ENCODE measurements at regions of chr19 and their contacts with region 1.

Region 1: DNA sequence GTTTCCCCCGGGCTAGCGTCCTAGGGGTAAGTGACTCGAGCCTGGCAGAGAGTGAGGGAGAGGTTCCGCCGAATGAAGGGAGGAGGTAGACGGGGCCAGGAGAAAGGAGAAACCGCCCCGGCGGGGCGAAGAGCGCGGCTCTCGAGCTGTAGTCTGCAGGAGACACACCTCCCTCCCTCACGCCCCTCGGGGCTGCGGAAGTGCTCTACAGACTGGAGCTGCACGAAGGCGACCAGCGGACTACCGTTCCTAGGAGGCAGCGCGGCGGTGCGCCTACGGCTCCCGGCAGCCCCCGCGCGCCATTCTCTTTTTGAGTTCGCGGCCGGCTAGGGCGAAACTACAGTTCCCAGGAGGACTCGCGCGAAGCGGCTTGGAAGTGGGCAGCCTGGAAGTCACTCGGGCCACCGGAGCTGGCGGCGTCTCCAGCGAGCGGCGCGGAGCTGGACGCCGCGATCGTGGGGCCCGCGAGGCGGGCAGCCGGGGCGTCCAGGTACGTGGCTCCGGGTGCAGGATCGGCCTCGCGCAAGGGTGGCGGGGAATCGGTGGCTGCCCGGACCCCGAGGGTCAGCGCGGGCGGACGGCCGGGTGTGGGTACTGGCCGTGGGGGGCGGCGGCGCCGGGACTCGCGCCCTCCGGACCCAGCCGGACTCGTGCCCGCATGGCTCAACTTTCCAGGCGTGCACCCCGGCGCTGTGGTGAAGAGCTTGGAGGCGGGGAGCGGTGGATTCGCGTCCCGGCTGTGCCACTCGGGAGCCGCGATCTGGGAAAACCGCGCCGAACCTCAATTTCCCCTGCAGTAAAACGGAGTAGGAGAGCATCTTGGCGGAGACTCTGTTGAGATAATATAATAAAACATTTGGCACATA is at the start of gene SIPA1L3:
- DNase-seq: peak; percentile 96
- ATAC-seq: peak; percentile 93
- H3K4me3 ChIP-seq: peak within 1 kb of the TSS; percentile 68 to 99 (median 94)
- H3K4me3 Mint-ChIP-seq: peak within 1 kb of the TSS; percentile 91
- H3K27ac ChIP-seq: peak within 1 kb of the TSS; percentile 64 to 84
- H3K27ac Mint-ChIP-seq: peak within 1 kb of the TSS; percentile 96
- H3K4me1 ChIP-seq: peaks cover 55 to 63% of the 10 kb centered on the region in 2 donors
- H3K4me1 Mint-ChIP-seq: peaks cover 58% of the 10 kb centered on the region
- H3K27me3 ChIP-seq: no peaks in the 10 kb centered on the region
- H3K27me3 Mint-ChIP-seq: no peaks in the 10 kb centered on the region
- CTCF ChIP-seq: no peak
- total RNA-seq, gene SIPA1L3: 290 and 295 TPM in 2 replicates

Region 2: DNA sequence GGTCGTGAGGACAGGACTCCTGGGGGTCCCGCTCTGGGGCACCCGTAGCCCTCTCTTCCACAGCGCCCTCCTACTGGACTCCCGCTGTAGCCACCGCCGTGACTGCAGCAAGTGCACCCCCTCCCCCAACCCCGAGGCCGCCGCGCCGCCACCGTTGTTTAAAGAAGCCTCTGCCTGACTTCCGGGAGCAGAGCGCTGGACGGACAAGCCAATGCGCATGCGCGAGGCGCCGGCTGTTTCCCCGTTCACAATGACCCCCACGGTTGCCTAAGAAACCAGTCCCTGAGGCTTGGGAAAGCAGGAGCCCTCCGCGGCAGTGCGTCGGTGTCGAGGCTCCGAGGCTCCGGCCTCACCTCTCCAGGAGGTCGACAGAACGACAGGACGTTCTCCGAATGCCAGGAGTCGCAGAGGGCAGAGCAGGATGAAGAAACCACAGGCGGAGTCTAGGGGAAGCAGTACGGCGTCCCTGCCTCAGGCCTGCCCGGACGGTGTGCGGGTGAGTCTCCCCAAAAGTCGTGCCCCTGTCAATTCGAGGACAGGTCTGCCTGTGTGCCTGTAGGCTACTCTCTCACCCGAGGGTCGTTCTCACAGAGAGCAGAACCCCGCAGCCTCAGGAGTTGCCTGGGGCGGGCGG is 899.4 kb before region 1 on chr19:
- CTCF ChIA-PET with region 1: no interaction called
- POLR2A ChIA-PET with region 1: no interaction called
- intact Hi-C with region 1: no loop called
- DNase-seq: peak; percentile 28
- ATAC-seq: no peak
- H3K4me3 ChIP-seq: peak overlapping the region in 4 of 5 experiments; percentile 12 to 68 (median 40)
- H3K4me3 Mint-ChIP-seq: peak overlapping the region; percentile 81
- H3K27ac ChIP-seq: no peak overlapping the region
- H3K27ac Mint-ChIP-seq: peak overlapping the region; percentile 11
- H3K4me1 ChIP-seq: no peaks in the 10 kb centered on the region
- H3K4me1 Mint-ChIP-seq: no peaks in the 10 kb centered on the region
- H3K27me3 ChIP-seq: no peaks in the 10 kb centered on the region
- H3K27me3 Mint-ChIP-seq: no peaks in the 10 kb centered on the region
- CTCF ChIP-seq: no peak

Region 3: GRCh38 chr19:37874784-37875183 is 32.3 kb before region 1 on chr19:
- CTCF ChIA-PET with region 1: no interaction called
- POLR2A ChIA-PET with region 1: no interaction called
- intact Hi-C with region 1: no loop called
- DNase-seq: no peak
- ATAC-seq: no peak
- H3K4me3 ChIP-seq: no peak overlapping the region
- H3K4me3 Mint-ChIP-seq: no peak overlapping the region
- H3K27ac ChIP-seq: no peak overlapping the region
- H3K27ac Mint-ChIP-seq: no peak overlapping the region
- H3K4me1 ChIP-seq: no peaks in the 10 kb centered on the region
- H3K4me1 Mint-ChIP-seq: no peaks in the 10 kb centered on the region
- H3K27me3 ChIP-seq: peaks cover 0 to under 1% (median 0%) of the 10 kb centered on the region in 4 experiments
- H3K27me3 Mint-ChIP-seq: peaks cover 9% of the 10 kb centered on the region
- CTCF ChIP-seq: no peak

Region 4: DNA sequence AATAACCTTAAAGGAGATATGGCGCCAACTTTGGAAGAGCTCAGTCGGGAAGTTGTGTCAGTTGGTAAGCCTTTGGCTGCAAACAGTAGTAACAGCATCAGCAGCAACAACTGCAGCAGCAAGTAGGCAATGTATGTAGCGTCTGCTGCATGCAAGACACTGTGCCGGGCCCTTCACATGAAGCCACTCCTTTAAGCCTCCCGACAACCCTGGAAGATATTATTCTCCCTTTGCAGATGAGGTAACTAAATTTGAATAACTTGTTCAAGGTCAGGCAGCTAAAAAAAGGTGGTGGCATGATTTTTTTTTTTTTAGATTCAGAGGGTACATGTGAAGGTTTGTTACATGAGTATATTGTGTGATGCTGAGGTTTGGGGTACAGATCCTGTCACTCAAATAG is 19.6 kb after region 1 on chr19:
- CTCF ChIA-PET with region 1: interaction called, 54 read pairs
- POLR2A ChIA-PET with region 1: interaction called, 46 read pairs
- intact Hi-C with region 1: loop called (anchors 1 kb)
- DNase-seq: peak; percentile 48
- ATAC-seq: peak; percentile 11
- H3K4me3 ChIP-seq: no peak overlapping the region
- H3K4me3 Mint-ChIP-seq: peak overlapping the region; percentile 80
- H3K27ac ChIP-seq: peak overlapping the region; percentile 65 to 85
- H3K27ac Mint-ChIP-seq: peak overlapping the region; percentile 92
- H3K4me1 ChIP-seq: peaks cover 87 to 96% of the 10 kb centered on the region in 2 donors
- H3K4me1 Mint-ChIP-seq: peaks cover 79% of the 10 kb centered on the region
- H3K27me3 ChIP-seq: no peaks in the 10 kb centered on the region
- H3K27me3 Mint-ChIP-seq: no peaks in the 10 kb centered on the region
- CTCF ChIP-seq: no peak

Region 5: DNA sequence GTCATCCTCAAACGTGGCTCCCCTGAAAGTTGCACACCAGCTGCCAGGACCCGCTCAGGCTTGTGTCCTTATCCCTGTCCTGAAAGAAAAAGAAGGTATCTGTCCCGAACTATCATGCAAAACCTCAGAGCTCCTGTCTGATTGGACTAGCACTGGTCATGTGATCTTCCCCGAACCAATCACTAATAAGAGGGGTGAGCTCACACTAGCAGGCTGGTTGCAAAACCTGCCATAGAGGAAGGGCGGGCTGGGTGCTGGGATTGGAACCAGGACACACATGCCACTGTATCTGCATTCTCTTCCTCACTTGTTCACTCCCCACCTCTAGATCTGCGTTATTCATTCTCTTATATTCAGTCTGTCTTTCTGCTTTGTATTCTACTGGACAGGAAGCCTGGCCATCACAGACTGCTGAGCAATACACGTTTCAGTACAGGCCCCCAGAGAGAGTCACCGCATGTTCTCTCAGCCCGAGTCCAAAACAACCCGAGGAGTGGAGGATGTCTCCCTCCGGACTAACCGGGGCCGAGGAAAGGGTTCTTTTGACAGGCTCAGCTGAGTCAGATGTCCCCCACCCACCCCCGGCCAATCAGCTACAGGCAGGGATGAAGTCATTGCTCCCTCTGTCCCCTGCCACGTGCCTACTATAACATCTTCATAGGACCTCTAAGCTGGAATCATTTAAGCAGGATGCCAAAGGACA is 97.6 kb after region 1 on chr19:
- CTCF ChIA-PET with region 1: interaction called, 40 read pairs
- POLR2A ChIA-PET with region 1: interaction called, 23 read pairs
- intact Hi-C with region 1: loop called (anchors 1 kb)
- DNase-seq: peak; percentile 79
- ATAC-seq: peak; percentile 45
- H3K4me3 ChIP-seq: peak overlapping the region in 4 of 5 experiments; percentile 5 to 55 (median 50)
- H3K4me3 Mint-ChIP-seq: no peak overlapping the region
- H3K27ac ChIP-seq: peak overlapping the region; percentile 85 to 92
- H3K27ac Mint-ChIP-seq: no peak overlapping the region
- H3K4me1 ChIP-seq: peaks cover 73 to 83% of the 10 kb centered on the region in 2 donors
- H3K4me1 Mint-ChIP-seq: peaks cover 35% of the 10 kb centered on the region
- H3K27me3 ChIP-seq: no peaks in the 10 kb centered on the region
- H3K27me3 Mint-ChIP-seq: no peaks in the 10 kb centered on the region
- CTCF ChIP-seq: no peak

Region 6: DNA sequence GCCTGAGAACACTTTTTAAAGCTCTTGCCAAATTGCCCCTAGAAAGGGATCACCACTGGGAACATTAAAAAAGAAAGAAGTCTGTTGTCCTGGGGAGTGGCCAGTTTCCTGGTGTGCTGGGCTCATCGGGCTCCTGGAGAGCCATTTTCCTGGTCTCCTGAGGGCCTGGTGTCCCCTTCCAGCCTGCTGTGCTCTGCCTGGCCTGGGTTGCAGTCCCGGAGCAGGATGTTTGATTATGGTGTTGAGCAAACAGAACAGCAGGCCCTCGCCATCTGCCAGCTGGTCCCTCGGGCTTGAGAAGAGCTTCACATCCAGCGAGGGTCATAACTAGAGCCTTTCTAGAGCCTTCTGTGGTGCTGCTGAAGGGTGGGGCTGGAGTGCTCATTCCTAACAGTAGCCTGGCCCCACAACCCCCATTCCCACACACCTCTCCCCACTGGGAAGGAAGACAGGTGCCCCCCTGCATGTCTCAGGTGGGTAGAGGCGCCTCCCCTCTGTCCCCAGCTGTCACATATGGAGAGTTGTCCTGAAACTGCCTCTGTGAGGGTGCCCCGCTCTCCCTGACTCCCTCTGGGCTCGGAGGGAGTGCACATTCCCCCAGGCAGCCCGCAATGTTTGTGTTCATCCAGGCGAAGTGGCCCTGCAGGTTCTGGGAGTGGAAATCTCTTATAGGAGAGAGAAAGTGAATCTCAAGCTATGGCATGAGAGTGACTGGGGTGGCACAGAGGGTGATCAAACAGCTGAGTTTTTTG is 151.0 kb after region 1 on chr19:
- CTCF ChIA-PET with region 1: interaction called, 34 read pairs
- POLR2A ChIA-PET with region 1: no interaction called
- intact Hi-C with region 1: no loop called
- DNase-seq: no peak
- ATAC-seq: no peak
- H3K4me3 ChIP-seq: no peak overlapping the region
- H3K4me3 Mint-ChIP-seq: peak overlapping the region; percentile 45
- H3K27ac ChIP-seq: peak overlapping the region; percentile 42 to 75
- H3K27ac Mint-ChIP-seq: peak overlapping the region; percentile 92
- H3K4me1 ChIP-seq: peaks cover 27 to 50% of the 10 kb centered on the region in 2 donors
- H3K4me1 Mint-ChIP-seq: peaks cover 60% of the 10 kb centered on the region
- H3K27me3 ChIP-seq: no peaks in the 10 kb centered on the region
- H3K27me3 Mint-ChIP-seq: no peaks in the 10 kb centered on the region
- CTCF ChIP-seq: no peak

Region 7: DNA sequence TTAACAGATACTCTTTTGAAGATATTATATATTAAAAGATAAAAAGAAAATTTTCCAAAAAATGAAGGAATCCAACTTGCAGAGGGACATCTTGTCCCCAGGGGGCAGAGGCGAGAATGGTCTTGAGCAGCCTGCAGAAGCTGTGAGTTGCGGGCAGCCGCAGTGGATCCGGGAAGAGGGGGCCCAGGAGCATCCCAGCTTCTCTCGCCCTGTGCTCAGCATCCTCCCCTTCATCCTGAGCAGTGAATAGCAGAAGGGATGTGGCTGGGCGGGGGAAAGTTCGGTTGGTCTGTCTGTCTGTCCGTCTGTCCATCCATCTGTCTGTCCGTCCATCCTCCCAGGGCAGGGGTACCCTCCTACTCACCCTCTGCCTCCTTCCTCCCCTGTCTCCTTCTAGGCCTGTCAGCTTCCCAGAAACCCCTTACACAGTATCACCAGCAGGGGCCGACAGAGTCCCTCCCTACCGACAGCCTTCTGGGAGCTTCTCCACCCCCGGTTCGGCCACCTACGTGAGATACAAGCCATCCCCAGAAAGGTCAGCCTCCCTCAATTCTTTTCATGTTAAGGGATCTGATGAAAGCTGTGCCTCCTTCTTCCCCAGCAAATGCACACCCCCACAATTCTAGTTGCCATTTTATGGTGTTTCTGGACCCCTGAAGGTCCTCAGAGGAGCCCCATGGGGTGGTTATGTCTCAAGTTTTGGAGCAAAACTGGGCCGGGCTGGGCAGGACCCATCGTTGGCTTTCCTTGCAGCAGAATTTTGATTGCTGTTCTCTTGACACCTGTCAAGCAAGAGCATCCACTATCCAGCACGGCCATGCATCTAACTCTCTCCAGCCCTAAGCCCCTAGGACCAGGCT is 235.3 kb after region 1 on chr19:
- CTCF ChIA-PET with region 1: interaction called, 62 read pairs
- POLR2A ChIA-PET with region 1: no interaction called
- intact Hi-C with region 1: no loop called
- DNase-seq: peak; percentile 49
- ATAC-seq: peak; percentile 66
- H3K4me3 ChIP-seq: no peak overlapping the region
- H3K4me3 Mint-ChIP-seq: no peak overlapping the region
- H3K27ac ChIP-seq: no peak overlapping the region
- H3K27ac Mint-ChIP-seq: peak overlapping the region; percentile 74
- H3K4me1 ChIP-seq: no peaks in the 10 kb centered on the region
- H3K4me1 Mint-ChIP-seq: no peaks in the 10 kb centered on the region
- H3K27me3 ChIP-seq: no peaks in the 10 kb centered on the region
- H3K27me3 Mint-ChIP-seq: no peaks in the 10 kb centered on the region
- CTCF ChIP-seq: peak; percentile 51

Region 8: GRCh38 chr19:38194056-38194701 is 287.1 kb after region 1 on chr19:
- CTCF ChIA-PET with region 1: no interaction called
- POLR2A ChIA-PET with region 1: no interaction called
- intact Hi-C with region 1: no loop called
- DNase-seq: no peak
- ATAC-seq: no peak
- H3K4me3 ChIP-seq: no peak overlapping the region
- H3K4me3 Mint-ChIP-seq: no peak overlapping the region
- H3K27ac ChIP-seq: no peak overlapping the region
- H3K27ac Mint-ChIP-seq: no peak overlapping the region
- H3K4me1 ChIP-seq: no peaks in the 10 kb centered on the region
- H3K4me1 Mint-ChIP-seq: peaks cover 4% of the 10 kb centered on the region
- H3K27me3 ChIP-seq: no peaks in the 10 kb centered on the region
- H3K27me3 Mint-ChIP-seq: no peaks in the 10 kb centered on the region
- CTCF ChIP-seq: no peak

Region 9: GRCh38 chr19:38315657-38316476 is 408.8 kb after region 1 on chr19 and contains the start of gene YIF1B:
- CTCF ChIA-PET with region 1: interaction called, 3 read pairs
- POLR2A ChIA-PET with region 1: no interaction called
- intact Hi-C with region 1: loop called (anchors 1 kb)
- DNase-seq: peak; percentile 96
- ATAC-seq: peak; percentile 91
- H3K4me3 ChIP-seq: peak within 1 kb of the TSS; percentile 62 to 90 (median 70)
- H3K4me3 Mint-ChIP-seq: peak within 1 kb of the TSS; percentile 96
- H3K27ac ChIP-seq: peak within 1 kb of the TSS; percentile 85 to 91
- H3K27ac Mint-ChIP-seq: peak within 1 kb of the TSS; percentile 96
- H3K4me1 ChIP-seq: peaks cover 29 to 47% of the 10 kb centered on the region in 2 donors
- H3K4me1 Mint-ChIP-seq: peaks cover 47% of the 10 kb centered on the region
- H3K27me3 ChIP-seq: peaks cover 0 to 2% (median 0%) of the 10 kb centered on the region in 4 experiments
- H3K27me3 Mint-ChIP-seq: no peaks in the 10 kb centered on the region
- CTCF ChIP-seq: no peak
- total RNA-seq, gene YIF1B: 30.6 and 31.6 TPM in 2 replicates

Region 10: DNA sequence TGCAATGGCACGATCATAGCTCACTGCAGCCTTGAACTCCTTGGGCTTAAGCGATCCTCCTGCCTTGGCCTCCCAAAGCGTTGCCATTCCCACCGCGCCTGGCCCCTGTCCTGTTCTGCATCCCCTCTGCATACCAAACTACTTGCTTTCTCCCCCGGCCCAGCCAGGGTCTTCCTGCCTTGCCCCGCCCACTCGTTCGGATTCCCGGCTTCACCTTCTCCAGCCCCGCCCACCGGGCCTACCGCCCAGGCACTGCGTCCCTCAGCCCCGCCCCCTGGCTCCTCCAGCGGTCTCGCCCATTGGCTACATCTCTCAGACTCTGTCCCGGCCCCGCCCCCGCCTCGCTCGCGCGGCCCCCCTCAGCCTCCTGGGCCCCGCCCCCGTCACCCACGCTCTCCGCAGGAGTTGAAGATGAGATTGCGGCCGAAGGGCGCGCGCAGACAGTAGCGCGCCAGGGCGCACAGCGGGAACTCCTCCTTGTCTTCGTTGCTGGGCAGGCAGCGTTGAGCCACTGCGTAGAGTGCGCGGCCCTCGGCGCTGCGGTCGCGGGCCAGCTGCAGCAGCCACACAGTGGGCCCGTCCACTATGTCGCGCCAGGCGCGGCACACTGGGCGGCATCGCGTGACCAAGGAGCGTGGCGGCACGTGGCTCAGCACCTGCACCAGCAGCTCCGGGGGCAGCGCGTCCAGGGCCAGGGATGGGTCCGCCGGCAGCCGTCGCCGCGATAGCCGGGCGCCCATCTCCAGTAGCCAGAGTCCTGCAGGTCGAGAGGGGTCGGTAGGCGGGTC is 1042.7 kb after region 1 on chr19:
- CTCF ChIA-PET with region 1: no interaction called
- POLR2A ChIA-PET with region 1: no interaction called
- intact Hi-C with region 1: no loop called
- DNase-seq: peak; percentile 78
- ATAC-seq: peak; percentile 92
- H3K4me3 ChIP-seq: peak overlapping the region in 4 of 5 experiments; percentile 13 to 54 (median 39)
- H3K4me3 Mint-ChIP-seq: peak overlapping the region; percentile 83
- H3K27ac ChIP-seq: no peak overlapping the region
- H3K27ac Mint-ChIP-seq: no peak overlapping the region
- H3K4me1 ChIP-seq: peaks cover 10 to 12% of the 10 kb centered on the region in 2 donors
- H3K4me1 Mint-ChIP-seq: peaks cover 12% of the 10 kb centered on the region
- H3K27me3 ChIP-seq: peaks cover 0 to 23% (median 2%) of the 10 kb centered on the region in 4 experiments
- H3K27me3 Mint-ChIP-seq: peaks cover 34% of the 10 kb centered on the region
- CTCF ChIP-seq: no peak

Measured in B cell (primary cell).